ENCODE measurements at regions of chr6 and their contacts with region 1.

Region 1: DNA sequence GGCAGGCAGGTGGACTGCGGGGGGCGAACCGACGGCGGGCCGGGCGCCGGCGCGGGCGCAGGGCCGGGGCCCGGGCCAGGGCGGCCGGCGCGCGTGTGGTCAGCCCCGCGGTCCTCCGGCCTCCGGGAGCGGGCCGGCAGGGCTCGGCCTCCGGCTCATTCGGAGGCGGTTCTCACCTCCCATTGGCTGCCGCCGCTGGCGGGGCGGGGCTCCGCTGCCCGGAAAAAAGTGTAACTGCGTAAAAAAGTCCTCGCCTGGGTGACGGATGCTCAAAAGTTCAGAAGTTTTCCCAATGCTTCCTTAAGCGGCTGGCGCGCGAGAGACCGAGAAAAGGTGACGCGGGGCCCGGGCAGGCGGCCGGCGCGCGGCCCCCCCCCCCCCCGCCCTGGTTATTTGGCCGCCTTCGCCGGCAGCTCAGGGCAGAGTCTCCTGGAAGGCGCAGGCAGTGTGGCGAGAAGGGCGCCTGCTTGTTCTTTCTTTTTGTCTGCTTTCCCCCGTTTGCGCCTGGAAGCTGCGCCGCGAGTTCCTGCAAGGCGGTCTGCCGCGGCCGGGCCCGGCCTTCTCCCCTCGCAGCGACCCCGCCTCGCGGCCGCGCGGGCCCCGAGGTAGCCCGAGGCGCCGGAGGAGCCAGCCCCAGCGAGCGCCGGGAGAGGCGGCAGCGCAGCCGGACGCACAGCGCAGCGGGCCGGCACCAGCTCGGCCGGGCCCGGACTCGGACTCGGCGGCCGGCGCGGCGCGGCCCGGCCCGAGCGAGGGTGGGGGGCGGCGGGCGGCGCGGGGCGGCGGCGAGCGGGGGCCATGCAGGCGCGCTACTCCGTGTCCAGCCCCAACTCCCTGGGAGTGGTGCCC is at the start of gene FOXC1:
- DNase-seq: no peak
- H3K4me3 ChIP-seq: peak within 1 kb of the TSS; percentile 57 to 83 (median 63)
- H3K27ac ChIP-seq: peak within 1 kb of the TSS; percentile 85 to 96 (median 89)
- H3K4me1 ChIP-seq: peaks cover 24 to 90% (median 48%) of the 10 kb centered on the region in 3 donors
- H3K27me3 ChIP-seq: peaks cover 12 to 99% (median 39%) of the 10 kb centered on the region in 4 donors
- CTCF ChIP-seq: no peak
- POLR2A ChIP-seq: peak in 1 of 4 donors; percentile 59
- total RNA-seq, gene FOXC1: 2.2 to 6.0 (median 3.4) TPM

Region 2: DNA sequence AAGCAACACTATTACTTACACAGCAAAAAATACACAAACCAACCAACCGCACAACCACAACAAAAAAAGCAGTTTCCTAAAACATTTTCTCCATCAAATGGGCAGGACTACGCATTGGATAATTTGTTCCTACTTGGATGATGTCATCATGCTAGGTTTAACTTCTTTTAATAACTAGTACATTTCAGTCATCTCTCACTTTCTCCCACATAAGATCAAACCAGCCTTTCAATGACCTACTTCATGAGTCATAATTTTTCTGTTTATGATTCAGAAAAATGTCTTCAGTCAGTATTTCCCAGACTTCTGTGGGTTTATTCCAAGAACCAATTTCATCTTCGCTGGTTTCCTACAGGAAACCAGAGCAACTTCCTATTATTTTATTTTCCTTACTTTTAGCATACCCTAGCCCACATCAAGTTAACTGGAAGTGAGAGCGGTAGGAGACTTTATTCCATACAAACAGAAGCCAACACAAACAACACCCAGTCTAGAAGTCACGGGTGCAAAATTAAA is 501.3 kb after region 1 on chr6:
- intact Hi-C with region 1: loop called (anchors 10 kb)
- DNase-seq: no peak
- H3K4me3 ChIP-seq: peak overlapping the region in 1 of 4 donors; percentile 16
- H3K27ac ChIP-seq: peak overlapping the region in 2 of 4 donors; percentile 25 to 60
- H3K4me1 ChIP-seq: peaks cover 0 to 19% (median 16%) of the 10 kb centered on the region in 3 donors
- H3K27me3 ChIP-seq: no peaks in the 10 kb centered on the region
- CTCF ChIP-seq: no peak
- POLR2A ChIP-seq: no peak

Region 3: GRCh38 chr6:2450335-2450945 is 840.6 kb after region 1 on chr6:
- intact Hi-C with region 1: loop called (anchors 10 kb)
- DNase-seq: no peak
- H3K4me3 ChIP-seq: no peak overlapping the region
- H3K27ac ChIP-seq: no peak overlapping the region
- H3K4me1 ChIP-seq: peaks cover 0 to 5% (median 0%) of the 10 kb centered on the region in 3 donors
- H3K27me3 ChIP-seq: peaks cover 0 to 5% (median 0%) of the 10 kb centered on the region in 4 donors
- CTCF ChIP-seq: no peak
- POLR2A ChIP-seq: no peak